GM12878 (cell line): ENCODE measurements at regions of chr11 and their contacts with region 1.

Region 1: DNA sequence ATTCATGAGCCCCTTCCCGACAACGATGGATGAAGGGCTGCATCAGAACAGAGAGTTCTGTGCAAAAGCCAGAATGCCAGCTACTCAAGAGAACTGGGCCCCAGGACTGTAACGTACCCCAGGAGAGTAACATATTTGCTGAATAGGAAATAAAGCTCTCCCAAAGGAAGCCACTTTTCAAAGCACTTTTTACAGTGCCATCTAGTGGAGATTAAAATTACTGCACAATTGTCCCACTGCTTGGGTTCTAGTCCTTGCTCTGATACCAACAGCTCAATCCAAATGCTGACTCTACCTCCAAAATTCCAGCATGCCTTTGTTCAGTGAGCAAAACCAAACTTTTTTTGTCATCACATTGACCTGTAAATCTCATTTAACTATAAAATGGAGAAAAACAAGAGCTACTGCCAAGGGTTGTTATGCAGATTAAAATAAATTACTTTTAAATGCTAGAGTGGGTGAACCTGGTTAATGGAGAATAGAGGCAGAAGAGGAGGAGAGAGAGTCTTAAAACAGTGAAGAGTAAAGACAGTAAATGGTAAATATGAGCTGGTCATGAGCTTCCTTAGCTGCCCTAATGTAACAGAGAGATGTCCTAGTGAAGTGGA is 87.6 kb upstream of the FSHB start:
- DNase-seq: peak; percentile 9
- ATAC-seq: peak; percentile 85
- H3K4me3 ChIP-seq: no peak overlapping the region
- H3K27ac ChIP-seq: no peak overlapping the region
- H3K4me1 ChIP-seq: no peaks in the 10 kb centered on the region
- H3K27me3 ChIP-seq: no peaks in the 10 kb centered on the region
- CTCF ChIP-seq: peak; percentile 58 to 78 (median 68)
- EP300 ChIP-seq: no peak
- POLR2A ChIP-seq: no peak
- RAD21 ChIP-seq: peak; percentile 55

Region 2: GRCh38 chr11:29343465-29344333 is 799.5 kb before region 1 on chr11:
- CTCF ChIA-PET with region 1: interaction called, 4 read pairs
- POLR2A ChIA-PET with region 1: no interaction called
- RAD21 ChIA-PET with region 1: interaction called, 3 read pairs
- SMC1A ChIA-PET with region 1: interaction called, 5 read pairs
- in situ Hi-C with region 1: no loop called
- intact Hi-C with region 1: loop called (anchors 5 kb)
- DNase-seq: no peak
- ATAC-seq: peak; percentile 98
- H3K4me3 ChIP-seq: no peak overlapping the region
- H3K27ac ChIP-seq: no peak overlapping the region
- H3K4me1 ChIP-seq: no peaks in the 10 kb centered on the region
- H3K27me3 ChIP-seq: no peaks in the 10 kb centered on the region
- CTCF ChIP-seq: peak; percentile 88 to 98 (median 97)
- EP300 ChIP-seq: no peak
- POLR2A ChIP-seq: no peak
- RAD21 ChIP-seq: peak; percentile 61

Region 3: DNA sequence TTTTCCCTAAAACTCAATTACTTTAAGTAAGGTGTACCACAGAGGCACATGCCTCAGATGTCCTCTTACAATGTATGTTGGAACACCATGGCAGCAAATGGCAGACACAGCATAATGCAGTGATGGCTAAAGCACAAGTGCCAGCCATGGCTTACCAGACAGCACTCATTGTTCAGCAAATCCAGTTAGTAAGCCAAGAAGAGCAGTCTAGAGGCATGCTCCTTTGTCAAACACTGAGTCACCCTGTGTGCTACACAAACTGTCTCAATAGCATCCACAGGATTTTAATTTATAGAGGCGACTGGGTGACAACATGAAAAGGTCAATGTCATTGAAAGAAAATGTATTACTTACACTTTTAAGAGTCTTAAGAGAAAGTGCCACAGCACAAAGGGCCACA is 267.0 kb before region 1 on chr11:
- CTCF ChIA-PET with region 1: no interaction called
- POLR2A ChIA-PET with region 1: no interaction called
- RAD21 ChIA-PET with region 1: no interaction called
- SMC1A ChIA-PET with region 1: no interaction called
- in situ Hi-C with region 1: no loop called
- intact Hi-C with region 1: no loop called
- DNase-seq: no peak
- ATAC-seq: no peak
- H3K4me3 ChIP-seq: no peak overlapping the region
- H3K27ac ChIP-seq: no peak overlapping the region
- H3K4me1 ChIP-seq: no peaks in the 10 kb centered on the region
- H3K27me3 ChIP-seq: no peaks in the 10 kb centered on the region
- CTCF ChIP-seq: no peak
- EP300 ChIP-seq: no peak
- POLR2A ChIP-seq: no peak
- RAD21 ChIP-seq: no peak

Region 4: GRCh38 chr11:30046582-30046952 is 96.6 kb before region 1 on chr11:
- CTCF ChIA-PET with region 1: interaction called, 7 read pairs
- POLR2A ChIA-PET with region 1: no interaction called
- RAD21 ChIA-PET with region 1: interaction called, 5 read pairs
- SMC1A ChIA-PET with region 1: interaction called, 5 read pairs
- in situ Hi-C with region 1: no loop called
- intact Hi-C with region 1: loop called (anchors 2 kb)
- DNase-seq: no peak
- ATAC-seq: peak; percentile 84
- H3K4me3 ChIP-seq: no peak overlapping the region
- H3K27ac ChIP-seq: no peak overlapping the region
- H3K4me1 ChIP-seq: no peaks in the 10 kb centered on the region
- H3K27me3 ChIP-seq: no peaks in the 10 kb centered on the region
- CTCF ChIP-seq: peak in 2 of 3 experiments; percentile 8 to 15; a peak in 2 of 6 replicates
- EP300 ChIP-seq: no peak
- POLR2A ChIP-seq: no peak
- RAD21 ChIP-seq: peak; percentile 23; the same call in 1 of the 2 replicates

Region 5: DNA sequence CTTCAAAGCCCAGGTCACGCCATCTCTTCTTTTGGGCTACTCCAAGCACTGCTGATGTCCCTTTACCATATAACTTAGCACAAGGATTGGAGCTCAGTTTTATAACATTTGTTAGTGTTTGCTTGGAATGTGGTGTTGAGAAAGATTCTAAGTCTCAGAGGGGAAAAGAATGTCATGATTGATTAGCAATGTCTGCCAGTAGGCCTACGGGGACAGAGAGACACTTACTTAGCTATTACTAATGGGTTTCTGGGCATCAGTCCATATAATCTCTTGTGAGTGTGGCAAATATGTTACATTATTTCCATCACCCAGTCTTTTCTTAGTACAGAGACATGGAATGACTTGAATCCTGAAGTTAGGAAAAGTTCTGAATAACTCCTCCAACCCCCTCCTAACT is 12.2 kb after region 1 on chr11:
- CTCF ChIA-PET with region 1: interaction called, 57 read pairs
- POLR2A ChIA-PET with region 1: interaction called, 3 read pairs
- RAD21 ChIA-PET with region 1: interaction called, 4 read pairs
- SMC1A ChIA-PET with region 1: interaction called, 16 read pairs
- in situ Hi-C with region 1: no loop called
- intact Hi-C with region 1: no loop called
- DNase-seq: no peak
- ATAC-seq: no peak
- H3K4me3 ChIP-seq: no peak overlapping the region
- H3K27ac ChIP-seq: no peak overlapping the region
- H3K4me1 ChIP-seq: no peaks in the 10 kb centered on the region
- H3K27me3 ChIP-seq: no peaks in the 10 kb centered on the region; a peak in 1 of 4 replicates
- CTCF ChIP-seq: no peak
- EP300 ChIP-seq: no peak
- POLR2A ChIP-seq: no peak
- RAD21 ChIP-seq: no peak

Region 6: DNA sequence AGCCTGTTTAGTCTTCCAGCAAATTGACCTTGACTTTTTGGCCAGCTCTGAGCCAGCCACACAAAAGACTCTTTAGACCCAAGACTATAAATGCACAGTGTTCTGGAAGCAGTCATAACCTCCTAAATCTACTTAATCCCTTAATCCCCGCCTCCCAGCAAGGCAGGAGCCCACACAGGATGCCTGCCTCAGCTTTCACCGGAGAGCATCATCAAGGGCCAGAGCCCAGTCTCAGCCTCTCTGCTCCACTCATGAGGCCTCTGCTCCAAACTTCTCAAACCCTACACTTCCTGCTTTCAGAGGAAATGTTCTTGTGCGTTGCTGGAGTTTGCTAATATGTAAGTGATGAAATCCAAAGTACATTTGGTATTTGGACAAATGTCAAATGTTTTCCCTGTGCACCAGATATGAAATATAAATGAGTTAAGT is 29.7 kb after region 1 on chr11:
- CTCF ChIA-PET with region 1: interaction called, 16 read pairs
- POLR2A ChIA-PET with region 1: no interaction called
- RAD21 ChIA-PET with region 1: no interaction called
- SMC1A ChIA-PET with region 1: interaction called, 3 read pairs
- in situ Hi-C with region 1: no loop called
- intact Hi-C with region 1: no loop called
- DNase-seq: no peak
- ATAC-seq: no peak
- H3K4me3 ChIP-seq: no peak overlapping the region
- H3K27ac ChIP-seq: no peak overlapping the region
- H3K4me1 ChIP-seq: no peaks in the 10 kb centered on the region
- H3K27me3 ChIP-seq: no peaks in the 10 kb centered on the region
- CTCF ChIP-seq: no peak
- EP300 ChIP-seq: no peak
- POLR2A ChIP-seq: no peak
- RAD21 ChIP-seq: no peak

Region 7: DNA sequence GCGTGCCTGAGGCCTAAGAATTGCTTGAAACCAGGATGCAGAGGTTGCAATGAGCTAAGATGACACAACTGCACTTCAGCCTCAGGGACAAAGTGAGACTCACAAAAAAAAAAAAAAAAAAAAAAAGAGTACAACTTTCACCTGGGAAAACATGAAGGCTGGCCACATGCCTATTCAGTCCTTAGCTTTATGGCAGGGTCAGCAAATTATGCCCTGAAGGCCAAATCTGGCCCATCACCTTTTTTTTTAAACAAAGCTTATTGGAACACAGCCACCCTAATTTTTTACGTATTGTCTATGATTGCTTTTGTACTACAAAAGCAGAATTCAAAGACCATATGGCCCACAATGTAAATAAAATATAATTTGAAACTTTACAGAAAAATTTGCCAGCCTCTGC is 95.8 kb after region 1 on chr11:
- CTCF ChIA-PET with region 1: interaction called, 36 read pairs
- POLR2A ChIA-PET with region 1: no interaction called
- RAD21 ChIA-PET with region 1: interaction called, 6 read pairs
- SMC1A ChIA-PET with region 1: interaction called, 10 read pairs
- in situ Hi-C with region 1: no loop called
- intact Hi-C with region 1: no loop called
- DNase-seq: no peak
- ATAC-seq: no peak
- H3K4me3 ChIP-seq: no peak overlapping the region
- H3K27ac ChIP-seq: no peak overlapping the region
- H3K4me1 ChIP-seq: no peaks in the 10 kb centered on the region
- H3K27me3 ChIP-seq: 0 out of 4 replicates have a peak, but pooled peaks cover 0 to 1% of the 10 kb centered on the region in 2 experiments
- CTCF ChIP-seq: no peak
- EP300 ChIP-seq: no peak
- POLR2A ChIP-seq: no peak
- RAD21 ChIP-seq: no peak

Region 8: GRCh38 chr11:30314625-30315024 is 171.4 kb after region 1 on chr11:
- CTCF ChIA-PET with region 1: interaction called, 21 read pairs
- POLR2A ChIA-PET with region 1: no interaction called
- RAD21 ChIA-PET with region 1: interaction called, 3 read pairs
- SMC1A ChIA-PET with region 1: interaction called, 17 read pairs
- in situ Hi-C with region 1: no loop called
- intact Hi-C with region 1: no loop called
- DNase-seq: no peak
- ATAC-seq: no peak
- H3K4me3 ChIP-seq: no peak overlapping the region
- H3K27ac ChIP-seq: no peak overlapping the region
- H3K4me1 ChIP-seq: peaks cover 17% of the 10 kb centered on the region
- H3K27me3 ChIP-seq: no peaks in the 10 kb centered on the region
- CTCF ChIP-seq: peak; percentile 39 to 55 (median 47); a peak in 5 of 6 replicates
- EP300 ChIP-seq: no peak
- POLR2A ChIP-seq: no peak
- RAD21 ChIP-seq: peak; percentile 58

Region 9: GRCh38 chr11:30521297-30522042 is 378.3 kb after region 1 on chr11:
- CTCF ChIA-PET with region 1: no interaction called
- POLR2A ChIA-PET with region 1: no interaction called
- RAD21 ChIA-PET with region 1: no interaction called
- SMC1A ChIA-PET with region 1: no interaction called
- in situ Hi-C with region 1: no loop called
- intact Hi-C with region 1: no loop called
- DNase-seq: no peak
- ATAC-seq: no peak
- H3K4me3 ChIP-seq: no peak overlapping the region
- H3K27ac ChIP-seq: no peak overlapping the region
- H3K4me1 ChIP-seq: no peaks in the 10 kb centered on the region
- H3K27me3 ChIP-seq: peaks cover 0 to 2% of the 10 kb centered on the region in 2 experiments; a peak in 2 of 4 replicates
- CTCF ChIP-seq: no peak
- EP300 ChIP-seq: no peak
- POLR2A ChIP-seq: no peak
- RAD21 ChIP-seq: no peak